BJ (cell line): ENCODE measurements at regions of chr6 and their contacts with region 1.

Region 1: DNA sequence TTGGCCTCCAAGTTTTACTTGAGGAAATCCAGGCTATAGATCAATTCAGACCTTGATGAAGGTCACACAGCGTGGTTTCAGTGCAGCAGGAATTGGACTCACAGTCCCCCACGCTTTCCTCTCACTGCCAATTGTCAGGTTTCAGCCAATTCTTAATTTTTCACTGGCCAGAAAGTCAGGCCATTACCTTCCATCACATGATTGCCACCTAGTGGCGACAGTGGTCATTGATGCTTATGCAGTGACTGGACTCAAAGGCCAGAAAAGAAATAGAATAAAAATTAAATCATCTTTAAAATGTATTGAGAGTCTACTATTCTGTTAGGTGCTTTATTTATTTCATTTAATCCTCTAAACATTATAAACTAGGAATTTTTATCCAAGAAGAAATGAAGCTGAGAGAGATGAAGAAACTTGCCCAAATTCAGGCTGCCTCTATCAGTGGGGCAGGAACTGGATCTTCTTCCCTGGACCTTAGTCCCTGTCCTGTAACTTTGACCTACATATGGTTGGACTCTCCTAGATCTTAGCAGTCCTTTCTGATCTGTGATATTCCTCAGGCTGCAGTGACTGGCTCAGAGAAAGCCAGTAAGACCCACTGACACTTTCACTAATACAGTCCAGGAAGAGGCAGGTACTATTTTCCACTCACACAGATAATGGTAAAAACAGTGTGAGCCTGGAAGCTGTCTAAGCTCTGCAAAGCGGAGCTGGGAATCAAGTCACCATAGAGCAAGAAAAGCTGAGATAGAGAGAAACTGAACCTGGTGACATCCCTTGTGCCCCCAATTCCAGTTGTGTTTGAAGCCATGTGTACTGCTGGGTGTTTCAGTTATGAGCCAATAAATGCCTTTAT is 133.3 kb downstream of the ELOVL4 start:
- DNase-seq: no peak
- H3K4me3 ChIP-seq: no peak overlapping the region
- H3K27me3 ChIP-seq: no peaks in the 10 kb centered on the region
- CTCF ChIP-seq: peak; percentile 87

Region 2: GRCh38 chr6:79824202-79824601 is 10.1 kb after region 1 on chr6:
- CTCF ChIA-PET with region 1: interaction called, 12 read pairs
- POLR2A ChIA-PET with region 1: no interaction called
- DNase-seq: no peak
- H3K4me3 ChIP-seq: no peak overlapping the region
- H3K27me3 ChIP-seq: no peaks in the 10 kb centered on the region
- CTCF ChIP-seq: no peak